BJ (cell line): ENCODE measurements at regions of chr13 and their contacts with region 1.

Region 1: DNA sequence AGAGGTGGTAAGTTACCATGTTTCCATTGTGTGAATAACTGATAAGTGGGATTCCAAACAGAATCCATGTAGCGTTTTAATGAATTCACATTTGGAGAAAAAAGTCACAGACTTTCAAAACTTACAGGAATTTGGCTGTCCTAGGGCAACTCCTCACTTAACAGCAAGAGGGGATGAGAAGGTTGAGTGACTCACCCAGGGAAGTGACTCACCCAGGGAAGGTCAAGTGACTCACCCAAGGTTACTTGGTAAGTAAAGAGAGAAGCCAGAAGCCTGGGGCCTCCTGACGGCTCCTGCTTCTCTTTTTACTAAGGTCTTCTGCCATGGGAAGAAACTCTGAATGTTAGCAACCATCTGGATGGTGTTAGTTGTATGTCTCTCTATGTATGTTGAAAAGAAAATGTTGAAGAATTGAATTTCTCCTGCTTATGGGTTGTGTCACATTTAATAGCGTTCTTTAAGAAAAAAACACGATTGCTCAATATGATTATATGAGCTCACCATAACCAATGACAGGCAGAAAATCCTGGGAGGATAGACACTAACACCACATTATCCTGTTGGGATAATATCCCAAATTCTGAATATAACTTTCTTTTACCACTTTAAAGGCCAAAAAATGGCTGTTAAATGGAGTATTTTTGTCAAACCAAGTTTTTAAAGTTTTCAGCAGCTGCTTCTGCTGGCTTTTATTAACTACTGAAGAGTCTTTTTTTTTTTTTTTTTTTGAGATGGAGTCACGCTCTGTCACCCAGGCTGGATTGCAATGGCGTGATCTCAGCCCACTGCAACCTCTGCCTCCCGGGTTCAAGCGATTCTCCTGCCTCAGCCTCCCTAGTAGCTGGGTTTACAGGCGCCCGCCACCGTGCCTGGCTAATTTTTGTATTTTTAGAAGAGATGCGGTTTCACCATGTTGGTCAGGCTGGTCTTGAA is 195.6 kb downstream of the GGACT start:
- DNase-seq: peak; percentile 99
- H3K4me3 ChIP-seq: no peak overlapping the region
- H3K27me3 ChIP-seq: no peaks in the 10 kb centered on the region
- CTCF ChIP-seq: no peak

Region 2: DNA sequence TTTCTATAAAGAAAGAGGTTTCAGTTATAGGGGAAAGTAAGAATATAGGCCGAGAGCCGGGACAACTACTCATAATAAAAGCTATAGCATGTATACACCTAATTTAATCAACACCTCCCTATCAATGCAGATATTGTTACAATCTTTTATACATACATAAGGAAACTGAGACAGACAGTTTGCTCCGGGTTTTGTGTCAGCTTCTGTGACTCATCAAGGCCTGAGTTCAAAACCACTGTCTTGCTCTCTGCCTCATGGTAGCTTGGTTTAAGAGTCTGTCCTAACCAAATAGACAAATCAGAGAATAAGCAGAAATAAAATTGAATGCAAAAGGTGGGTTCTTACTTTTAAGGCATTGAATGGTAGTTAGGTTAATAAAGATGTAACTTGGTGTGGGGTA is 27.3 kb before region 1 on chr13:
- CTCF ChIA-PET with region 1: no interaction called
- POLR2A ChIA-PET with region 1: interaction called, 13 read pairs
- DNase-seq: no peak
- H3K4me3 ChIP-seq: no peak overlapping the region
- H3K27me3 ChIP-seq: no peaks in the 10 kb centered on the region
- CTCF ChIP-seq: no peak